Activated CD8-positive, alpha-beta T cell treated with anti-CD3 and anti-CD28 coated beads for 36 hours (primary cell): ENCODE measurements at regions of chr11 and their contacts with region 1.

Region 1: GRCh38 chr11:75248690-75249268 is 8.2 kb downstream of the TPBGL start:
- DNase-seq: peak; percentile 93
- ATAC-seq: peak; percentile 98
- H3K4me3 Mint-ChIP-seq: no peak overlapping the region
- H3K27ac Mint-ChIP-seq: no peak overlapping the region
- H3K4me1 Mint-ChIP-seq: no peaks in the 10 kb centered on the region
- H3K27me3 Mint-ChIP-seq: peaks cover 3% of the 10 kb centered on the region
- CTCF ChIP-seq: peak; percentile 100

Region 2: GRCh38 chr11:75022759-75023396 is 225.9 kb before region 1 on chr11:
- CTCF ChIA-PET with region 1: interaction called, 36 read pairs
- POLR2A ChIA-PET with region 1: no interaction called
- intact Hi-C with region 1: loop called (anchors 2 kb)
- DNase-seq: peak; percentile 82
- ATAC-seq: peak; percentile 94
- H3K4me3 Mint-ChIP-seq: no peak overlapping the region
- H3K27ac Mint-ChIP-seq: no peak overlapping the region
- H3K4me1 Mint-ChIP-seq: no peaks in the 10 kb centered on the region
- H3K27me3 Mint-ChIP-seq: no peaks in the 10 kb centered on the region
- CTCF ChIP-seq: peak; percentile 98

Region 3: GRCh38 chr11:75214411-75214821 is 34.4 kb before region 1 on chr11:
- CTCF ChIA-PET with region 1: interaction called, 24 read pairs
- POLR2A ChIA-PET with region 1: no interaction called
- intact Hi-C with region 1: no loop called
- DNase-seq: peak; percentile 90
- ATAC-seq: peak; percentile 88
- H3K4me3 Mint-ChIP-seq: no peak overlapping the region
- H3K27ac Mint-ChIP-seq: no peak overlapping the region
- H3K4me1 Mint-ChIP-seq: no peaks in the 10 kb centered on the region
- H3K27me3 Mint-ChIP-seq: peaks cover 25% of the 10 kb centered on the region
- CTCF ChIP-seq: no peak

Region 4: DNA sequence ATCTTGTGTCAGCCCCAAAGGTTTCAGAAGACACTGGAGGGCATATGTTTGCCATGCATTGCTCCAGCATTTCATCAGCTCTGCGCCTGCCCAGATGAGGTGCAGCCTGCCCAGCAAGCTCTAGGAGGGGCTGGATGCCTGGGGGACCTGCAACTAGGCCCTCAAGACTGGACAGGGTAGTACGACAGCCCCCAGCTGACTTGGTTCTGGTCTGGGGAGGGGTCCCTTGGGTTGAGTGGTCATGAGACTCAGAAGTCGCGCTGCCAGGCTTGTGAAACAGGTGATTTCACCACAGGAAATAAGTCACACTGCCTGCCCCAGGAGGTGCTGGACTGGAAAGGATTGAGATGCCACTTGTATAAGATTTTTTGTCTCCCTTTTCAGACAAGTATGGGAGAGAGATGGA is 15.2 kb after region 1 on chr11:
- CTCF ChIA-PET with region 1: interaction called, 28 read pairs
- POLR2A ChIA-PET with region 1: interaction called, 4 read pairs
- intact Hi-C with region 1: no loop called
- DNase-seq: peak; percentile 52
- ATAC-seq: peak; percentile 61
- H3K4me3 Mint-ChIP-seq: no peak overlapping the region
- H3K27ac Mint-ChIP-seq: peak overlapping the region; percentile 23
- H3K4me1 Mint-ChIP-seq: peaks cover 41% of the 10 kb centered on the region
- H3K27me3 Mint-ChIP-seq: no peaks in the 10 kb centered on the region
- CTCF ChIP-seq: no peak

Region 5: GRCh38 chr11:75280227-75280701 is 31.5 kb after region 1 on chr11:
- CTCF ChIA-PET with region 1: interaction called, 17 read pairs
- POLR2A ChIA-PET with region 1: no interaction called
- intact Hi-C with region 1: no loop called
- DNase-seq: peak; percentile 82
- ATAC-seq: peak; percentile 82
- H3K4me3 Mint-ChIP-seq: no peak overlapping the region
- H3K27ac Mint-ChIP-seq: no peak overlapping the region
- H3K4me1 Mint-ChIP-seq: peaks cover 32% of the 10 kb centered on the region
- H3K27me3 Mint-ChIP-seq: no peaks in the 10 kb centered on the region
- CTCF ChIP-seq: peak; percentile 98

Region 6: DNA sequence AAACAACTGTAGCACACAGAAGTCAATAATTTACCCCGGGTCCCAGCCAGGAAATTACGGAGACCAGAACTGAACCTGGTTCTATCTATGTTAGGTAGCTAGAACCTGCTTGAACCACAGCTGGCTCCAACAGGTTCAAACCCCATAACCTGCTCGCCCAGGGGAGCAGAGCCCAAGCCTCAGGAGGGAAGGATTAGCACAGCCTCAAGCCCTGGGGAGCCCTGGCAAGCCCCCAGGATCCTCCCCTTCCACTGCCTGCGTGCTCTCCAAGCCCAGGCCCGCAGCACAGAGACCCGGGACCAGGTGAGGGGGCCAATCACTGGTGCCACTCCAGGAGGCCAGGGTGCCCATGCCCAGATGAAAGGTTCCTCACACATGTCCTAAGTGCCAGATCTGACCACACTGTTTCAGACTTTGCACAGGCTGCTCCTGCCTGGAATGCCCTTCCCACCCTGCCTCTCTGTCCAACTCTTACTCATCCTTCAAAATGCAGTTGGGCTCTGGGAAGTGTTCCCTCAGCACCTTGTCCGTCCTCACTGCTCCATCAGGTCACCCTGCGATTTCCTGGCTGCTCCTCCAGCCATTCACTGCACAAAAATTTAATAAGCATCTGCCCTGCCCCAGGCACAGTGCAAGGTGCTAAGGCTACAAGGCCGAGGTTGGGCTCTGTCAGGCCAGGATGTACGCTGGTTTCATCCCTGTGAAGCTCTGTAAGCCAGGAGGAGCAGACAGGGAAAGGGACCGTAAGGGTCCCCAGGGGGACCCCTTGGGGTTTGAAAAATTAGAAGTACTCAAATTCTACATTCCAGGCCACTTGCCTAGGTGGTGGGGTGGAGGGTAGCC is 70.5 kb after region 1 on chr11:
- CTCF ChIA-PET with region 1: no interaction called
- POLR2A ChIA-PET with region 1: no interaction called
- intact Hi-C with region 1: no loop called
- DNase-seq: no peak
- ATAC-seq: no peak
- H3K4me3 Mint-ChIP-seq: no peak overlapping the region
- H3K27ac Mint-ChIP-seq: no peak overlapping the region
- H3K4me1 Mint-ChIP-seq: peaks cover 21% of the 10 kb centered on the region
- H3K27me3 Mint-ChIP-seq: no peaks in the 10 kb centered on the region
- CTCF ChIP-seq: no peak